WTC11 (cell line): ENCODE measurements at regions of chr9 and their contacts with region 1.

Region 1: GRCh38 chr9:136327313-136327974 is at the start of gene GPSM1:
- DNase-seq: no peak
- ATAC-seq: peak; percentile 25
- H3K4me3 Mint-ChIP-seq: peak within 1 kb of the TSS; percentile 56
- H3K27ac Mint-ChIP-seq: no peak within 1 kb of the TSS
- H3K4me1 Mint-ChIP-seq: peaks cover 7% of the 10 kb centered on the region
- H3K27me3 Mint-ChIP-seq: no peaks in the 10 kb centered on the region
- CTCF ChIP-seq: no peak
- total RNA-seq, gene GPSM1: 14.2 to 16.2 TPM (median 16.2 TPM) in 3 replicates

Region 2: DNA sequence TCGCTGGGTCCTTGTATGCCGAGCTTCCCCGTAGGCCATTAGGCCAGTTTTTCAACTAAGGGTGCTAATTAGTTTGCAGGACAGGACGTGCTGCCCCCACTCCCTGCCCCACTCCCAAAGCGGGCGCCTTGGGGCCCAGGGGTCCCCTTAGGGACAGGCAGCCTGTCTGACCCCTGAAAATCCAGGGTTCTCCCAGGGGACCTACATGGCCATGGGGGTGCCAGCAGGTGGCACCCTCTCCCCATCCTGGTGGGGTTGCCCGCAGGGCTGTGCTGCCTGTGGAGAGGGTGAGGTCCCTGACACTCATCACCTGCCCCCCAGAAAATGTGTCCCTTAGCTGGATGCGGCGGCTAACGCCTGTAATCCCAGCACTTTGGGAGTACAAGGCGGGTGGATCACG is 15.0 kb before region 1 on chr9:
- CTCF ChIA-PET with region 1: interaction called, 15 read pairs
- POLR2A ChIA-PET with region 1: interaction called, 3 read pairs
- DNase-seq: no peak
- ATAC-seq: peak; percentile 56
- H3K4me3 Mint-ChIP-seq: no peak overlapping the region
- H3K27ac Mint-ChIP-seq: no peak overlapping the region
- H3K4me1 Mint-ChIP-seq: no peaks in the 10 kb centered on the region
- H3K27me3 Mint-ChIP-seq: no peaks in the 10 kb centered on the region; the same call in 1 of the 2 replicates
- CTCF ChIP-seq: 0 out of 2 replicates have a peak, but pooled peaks have one; percentile 10

Region 3: GRCh38 chr9:136339173-136339957 is 11.9 kb after region 1 on chr9:
- CTCF ChIA-PET with region 1: interaction called, 19 read pairs
- POLR2A ChIA-PET with region 1: no interaction called
- DNase-seq: peak; percentile 85
- ATAC-seq: peak; percentile 66
- H3K4me3 Mint-ChIP-seq: no peak overlapping the region
- H3K27ac Mint-ChIP-seq: no peak overlapping the region; the same call in 1 of the 2 replicates
- H3K4me1 Mint-ChIP-seq: no peaks in the 10 kb centered on the region
- H3K27me3 Mint-ChIP-seq: no peaks in the 10 kb centered on the region
- CTCF ChIP-seq: peak; percentile 94